Naive thymus-derived CD4-positive, alpha-beta T cell (primary cell): ENCODE measurements at regions of chr11 and their contacts with region 1.

Region 1: GRCh38 chr11:18321980-18322711 is at the starts of genes GTF2H1 and HPS5:
- DNase-seq: peak; percentile 88 to 99 (median 98)
- ATAC-seq: peak; percentile 93
- H3K4me3 ChIP-seq: peak within 1 kb of the TSS; percentile 96
- H3K4me3 Mint-ChIP-seq: peak within 1 kb of the TSS; percentile 85 to 100 (median 94)
- H3K27ac ChIP-seq: peak within 1 kb of the TSS; percentile 97
- H3K27ac Mint-ChIP-seq: peak within 1 kb of the TSS; percentile 99 to 100 (median 100)
- H3K4me1 ChIP-seq: peaks cover 32 to 33% of the 10 kb centered on the region in 2 donors
- H3K4me1 Mint-ChIP-seq: peaks cover 53 to 91% (median 81%) of the 10 kb centered on the region in 7 donors
- H3K27me3 ChIP-seq: no peaks in the 10 kb centered on the region
- H3K27me3 Mint-ChIP-seq: peaks cover 0 to 2% (median 0%) of the 10 kb centered on the region in 5 donors
- total RNA-seq, gene GTF2H1: 26.3 to 63.2 (median 59.0) TPM
- total RNA-seq, gene HPS5: 13.0 to 22.3 (median 16.6) TPM

Region 2: GRCh38 chr11:17276236-17277023 is 1045.7 kb before region 1 on chr11 and contains the start of gene NUCB2:
- CTCF ChIA-PET with region 1: no interaction called
- POLR2A ChIA-PET with region 1: no interaction called
- intact Hi-C with region 1: loop called (anchors 1 to 2 kb)
- DNase-seq: peak; percentile 92 to 98 (median 95)
- ATAC-seq: peak; percentile 96
- H3K4me3 ChIP-seq: peak within 1 kb of the TSS; percentile 78
- H3K4me3 Mint-ChIP-seq: peak within 1 kb of the TSS; percentile 83 to 99 (median 93)
- H3K27ac ChIP-seq: peak within 1 kb of the TSS; percentile 90
- H3K27ac Mint-ChIP-seq: peak within 1 kb of the TSS; percentile 88 to 93 (median 91)
- H3K4me1 ChIP-seq: peaks cover 17 to 28% of the 10 kb centered on the region in 2 donors
- H3K4me1 Mint-ChIP-seq: peaks cover 19 to 48% (median 38%) of the 10 kb centered on the region in 7 donors
- H3K27me3 ChIP-seq: no peaks in the 10 kb centered on the region
- H3K27me3 Mint-ChIP-seq: no peaks in the 10 kb centered on the region
- total RNA-seq, gene NUCB2: 72.0 to 171 (median 145) TPM

Region 3: DNA sequence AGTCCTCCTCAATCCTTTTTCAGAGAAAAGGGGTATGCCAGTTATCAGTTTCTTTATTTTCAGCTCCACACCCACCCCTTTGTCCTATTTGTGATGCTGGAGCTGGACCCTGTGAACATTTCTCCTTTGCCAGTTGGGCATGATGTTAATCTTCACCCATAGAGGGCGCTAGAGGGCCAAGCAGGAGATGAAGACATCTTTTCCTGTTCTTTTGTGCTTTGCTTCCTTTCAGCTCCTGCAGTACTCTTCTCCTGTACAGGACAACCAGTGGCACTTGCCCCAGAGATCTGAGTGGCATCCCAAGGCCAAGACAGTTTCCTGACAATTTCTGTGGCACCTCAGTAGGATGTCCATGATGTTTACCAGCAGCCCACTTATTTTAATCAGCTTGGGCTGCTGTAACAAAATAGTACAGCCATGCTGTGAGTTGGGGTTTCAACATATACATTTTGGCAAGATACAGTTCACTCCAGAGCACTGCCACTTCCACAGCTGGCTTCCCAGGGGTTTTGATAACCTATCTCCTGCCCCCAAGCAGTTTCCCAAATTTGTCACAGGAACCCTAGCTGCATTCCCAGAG is 78.3 kb before region 1 on chr11:
- CTCF ChIA-PET with region 1: no interaction called
- POLR2A ChIA-PET with region 1: no interaction called
- intact Hi-C with region 1: loop called in 1 of 2 experiments (anchors 1 kb)
- DNase-seq: peak in 8 of 9 donors; percentile 15 to 63 (median 50)
- ATAC-seq: peak; percentile 80
- H3K4me3 ChIP-seq: no peak overlapping the region
- H3K4me3 Mint-ChIP-seq: no peak overlapping the region
- H3K27ac ChIP-seq: no peak overlapping the region
- H3K27ac Mint-ChIP-seq: no peak overlapping the region
- H3K4me1 ChIP-seq: no peaks in the 10 kb centered on the region
- H3K4me1 Mint-ChIP-seq: peaks cover 0 to 32% (median 0%) of the 10 kb centered on the region in 7 donors
- H3K27me3 ChIP-seq: no peaks in the 10 kb centered on the region
- H3K27me3 Mint-ChIP-seq: peaks cover 6 to 37% (median 16%) of the 10 kb centered on the region in 5 donors

Region 4: DNA sequence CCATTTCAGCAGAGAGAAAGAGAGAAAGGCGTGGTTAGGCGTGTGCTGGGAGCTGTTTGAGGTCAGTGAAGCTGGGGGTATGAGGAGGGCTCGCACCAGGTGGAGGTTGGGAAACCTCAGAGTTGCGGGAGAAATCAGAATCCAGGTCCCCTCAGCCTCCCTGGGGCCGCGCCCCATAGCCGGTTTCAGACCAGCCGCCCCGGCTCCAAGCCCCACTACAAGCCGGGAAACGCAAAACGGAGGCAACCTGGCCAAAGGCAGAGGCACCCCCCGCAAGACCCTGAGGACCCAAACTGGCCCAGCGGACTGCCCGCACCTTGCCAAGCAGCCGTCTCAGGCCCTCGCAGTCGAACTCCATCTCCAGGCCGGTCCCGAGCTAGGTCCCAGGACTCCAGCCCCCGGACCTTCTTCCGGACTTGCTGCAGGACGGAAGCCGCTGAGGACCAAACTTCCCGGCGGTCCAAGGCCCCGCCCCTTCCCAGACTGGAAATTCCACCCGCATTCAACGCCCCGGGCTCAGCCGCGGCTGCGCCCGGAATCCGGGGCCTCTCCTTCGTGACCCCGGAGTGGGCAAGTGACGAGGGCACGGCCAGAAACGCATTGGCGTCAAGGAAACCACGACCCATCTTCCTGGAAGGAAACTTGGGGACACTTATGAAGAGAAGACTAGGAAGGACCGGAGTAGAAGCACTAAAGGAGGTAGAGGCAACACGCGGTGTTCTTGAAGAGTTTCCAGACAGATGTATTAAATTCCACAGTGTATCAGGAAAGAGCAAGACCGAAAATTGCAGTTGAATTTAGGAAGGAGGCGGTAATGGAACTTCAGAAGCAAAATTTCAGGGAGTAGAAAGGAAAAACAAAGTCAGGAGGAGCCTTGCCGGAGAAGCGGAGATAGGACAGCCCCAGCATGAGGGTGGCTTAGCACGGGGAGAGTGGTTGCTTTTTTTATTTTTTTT is 266.4 kb after region 1 on chr11 and contains the start of gene UEVLD:
- CTCF ChIA-PET with region 1: no interaction called
- POLR2A ChIA-PET with region 1: no interaction called
- intact Hi-C with region 1: loop called in 1 of 2 experiments (anchors 5 kb)
- DNase-seq: peak; percentile 18 to 82 (median 23)
- ATAC-seq: peak; percentile 62
- H3K4me3 ChIP-seq: peak within 1 kb of the TSS; percentile 63
- H3K4me3 Mint-ChIP-seq: no peak within 1 kb of the TSS
- H3K27ac ChIP-seq: peak within 1 kb of the TSS; percentile 68
- H3K27ac Mint-ChIP-seq: no peak within 1 kb of the TSS
- H3K4me1 ChIP-seq: peaks cover 8 to 15% of the 10 kb centered on the region in 2 donors
- H3K4me1 Mint-ChIP-seq: peaks cover 0 to 19% (median 0%) of the 10 kb centered on the region in 7 donors
- H3K27me3 ChIP-seq: no peaks in the 10 kb centered on the region
- H3K27me3 Mint-ChIP-seq: no peaks in the 10 kb centered on the region
- total RNA-seq, gene UEVLD: 3.6 to 19.8 (median 5.8) TPM

Region 5: DNA sequence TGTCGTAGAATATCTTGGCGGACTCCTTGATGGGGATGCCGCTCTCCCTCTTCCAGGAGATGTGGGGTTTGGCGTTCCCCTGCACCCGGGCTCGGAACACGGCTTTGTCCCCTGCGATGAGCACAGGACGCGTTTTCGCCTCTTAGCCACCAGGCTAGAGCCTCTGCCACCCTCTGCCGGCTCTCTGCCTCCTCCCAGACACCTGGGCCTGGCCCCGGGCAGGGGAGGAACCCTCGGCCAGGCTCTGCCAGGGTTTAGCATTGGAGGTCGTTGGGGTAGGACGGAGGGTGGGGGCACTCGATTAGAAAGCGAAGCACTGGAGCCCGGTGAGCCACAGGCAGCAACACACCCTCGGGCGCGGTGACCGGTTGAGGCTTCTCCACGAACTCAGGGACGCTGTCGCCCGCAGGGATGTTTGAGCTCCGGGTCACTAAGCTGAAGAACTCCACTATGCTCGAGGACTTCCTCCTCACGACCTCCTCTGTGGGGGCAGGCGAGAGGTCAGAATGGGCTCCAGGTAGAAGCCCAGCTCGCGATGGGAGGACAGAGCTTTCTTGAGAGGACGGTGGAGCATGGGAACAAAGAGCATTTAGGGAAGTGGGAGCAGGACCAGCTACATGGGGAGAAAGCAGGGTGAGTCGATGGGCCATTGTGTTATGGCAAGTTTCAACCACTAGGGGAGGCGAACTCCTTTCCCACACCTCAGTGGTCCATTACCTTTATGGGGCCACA is 399.6 kb after region 1 on chr11:
- CTCF ChIA-PET with region 1: interaction called, 4 read pairs
- POLR2A ChIA-PET with region 1: no interaction called
- intact Hi-C with region 1: loop called in 1 of 2 experiments (anchors 5 kb)
- DNase-seq: peak; percentile 15 to 51 (median 37)
- ATAC-seq: peak; percentile 61
- H3K4me3 ChIP-seq: peak overlapping the region; percentile 72
- H3K4me3 Mint-ChIP-seq: peak overlapping the region; percentile 82 to 97 (median 92)
- H3K27ac ChIP-seq: peak overlapping the region; percentile 46
- H3K27ac Mint-ChIP-seq: peak overlapping the region in 6 of 9 donors; percentile 39 to 89 (median 76)
- H3K4me1 ChIP-seq: peaks cover 0 to 5% of the 10 kb centered on the region in 2 donors
- H3K4me1 Mint-ChIP-seq: peaks cover 8 to 15% (median 9%) of the 10 kb centered on the region in 7 donors
- H3K27me3 ChIP-seq: no peaks in the 10 kb centered on the region
- H3K27me3 Mint-ChIP-seq: peaks cover 0 to 34% (median 0%) of the 10 kb centered on the region in 5 donors